Activated CD8-positive, alpha-beta memory T cell treated with anti-CD3 and anti-CD28 coated beads, Interleukin-2, amount 10 ng/mL, durations not matched to agents 7 days and 5 days (primary cell): ENCODE measurements at regions of chr1 and their contacts with region 1.

Region 1: GRCh38 chr1:160777486-160778089 is 18.4 kb upstream of the LY9 start:
- DNase-seq: peak; percentile 66
- ATAC-seq: peak; percentile 52
- H3K4me3 Mint-ChIP-seq: no peak overlapping the region
- H3K27ac Mint-ChIP-seq: peak overlapping the region; percentile 22
- H3K4me1 Mint-ChIP-seq: peaks cover 28% of the 10 kb centered on the region
- H3K27me3 Mint-ChIP-seq: no peaks in the 10 kb centered on the region

Region 2: GRCh38 chr1:160681067-160681890 is 96.3 kb before region 1 on chr1:
- CTCF ChIA-PET with region 1: interaction called, 29 read pairs
- DNase-seq: peak; percentile 93
- ATAC-seq: peak; percentile 72
- H3K4me3 Mint-ChIP-seq: no peak overlapping the region
- H3K27ac Mint-ChIP-seq: peak overlapping the region; percentile 92
- H3K4me1 Mint-ChIP-seq: peaks cover 83% of the 10 kb centered on the region
- H3K27me3 Mint-ChIP-seq: no peaks in the 10 kb centered on the region

Region 3: DNA sequence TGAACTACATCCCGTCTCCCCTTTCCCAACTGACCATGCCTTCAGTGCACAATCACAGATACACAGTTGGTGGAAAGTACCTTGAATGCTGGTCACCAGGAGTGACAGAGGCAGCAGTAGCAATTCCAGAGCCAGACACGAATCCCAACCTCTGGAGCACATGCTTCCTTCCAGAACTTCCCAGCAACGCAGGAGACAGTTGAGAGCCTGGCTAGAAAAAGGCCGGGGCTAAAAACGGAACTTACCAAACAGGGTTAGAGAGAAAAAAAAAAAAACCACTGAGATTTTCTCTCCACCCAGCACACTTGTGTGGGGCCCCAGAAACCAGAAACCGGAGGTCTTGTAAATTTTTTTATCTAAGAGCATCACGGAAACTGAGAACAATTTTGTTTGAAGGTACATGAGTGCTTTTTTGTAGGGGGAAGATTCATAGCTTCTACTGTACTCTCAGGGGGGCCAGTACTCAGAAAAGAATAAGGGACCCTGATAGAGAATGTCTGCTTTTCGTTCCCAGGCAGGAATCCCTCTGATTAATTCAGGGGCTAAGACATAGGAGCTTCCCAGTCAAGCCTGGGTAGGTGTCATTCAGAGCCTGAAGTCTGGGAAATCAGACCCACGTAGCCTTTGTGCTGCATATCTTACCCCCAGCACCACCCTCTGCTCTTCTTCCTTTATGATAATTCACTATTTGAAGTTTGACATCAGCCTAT is 65.8 kb before region 1 on chr1 and contains the start of gene CD48:
- CTCF ChIA-PET with region 1: interaction called, 10 read pairs
- DNase-seq: peak; percentile 79
- ATAC-seq: peak; percentile 48
- H3K4me3 Mint-ChIP-seq: no peak within 1 kb of the TSS
- H3K27ac Mint-ChIP-seq: no peak within 1 kb of the TSS
- H3K4me1 Mint-ChIP-seq: peaks cover 27% of the 10 kb centered on the region
- H3K27me3 Mint-ChIP-seq: no peaks in the 10 kb centered on the region
- total RNA-seq, gene CD48: 304 to 332 TPM

Region 4: GRCh38 chr1:160795951-160796383 is 18.4 kb after region 1 on chr1 and contains the start of gene LY9:
- CTCF ChIA-PET with region 1: interaction called, 133 read pairs
- DNase-seq: peak; percentile 93
- ATAC-seq: peak; percentile 92
- H3K4me3 Mint-ChIP-seq: peak within 1 kb of the TSS; percentile 74
- H3K27ac Mint-ChIP-seq: peak within 1 kb of the TSS; percentile 89
- H3K4me1 Mint-ChIP-seq: peaks cover 59% of the 10 kb centered on the region
- H3K27me3 Mint-ChIP-seq: peaks cover 27% of the 10 kb centered on the region
- total RNA-seq, gene LY9: 1.3 to 8.0 TPM

Region 5: GRCh38 chr1:160821628-160822027 is 44.0 kb after region 1 on chr1:
- CTCF ChIA-PET with region 1: interaction called, 17 read pairs
- DNase-seq: no peak
- ATAC-seq: no peak
- H3K4me3 Mint-ChIP-seq: no peak overlapping the region
- H3K27ac Mint-ChIP-seq: no peak overlapping the region
- H3K4me1 Mint-ChIP-seq: no peaks in the 10 kb centered on the region
- H3K27me3 Mint-ChIP-seq: no peaks in the 10 kb centered on the region

Region 6: GRCh38 chr1:160830321-160831153 is 52.9 kb after region 1 on chr1:
- CTCF ChIA-PET with region 1: interaction called, 54 read pairs
- DNase-seq: peak; percentile 81
- ATAC-seq: peak; percentile 70
- H3K4me3 Mint-ChIP-seq: no peak overlapping the region
- H3K27ac Mint-ChIP-seq: no peak overlapping the region
- H3K4me1 Mint-ChIP-seq: peaks cover 18% of the 10 kb centered on the region
- H3K27me3 Mint-ChIP-seq: no peaks in the 10 kb centered on the region

Region 7: GRCh38 chr1:160855181-160855981 is 77.8 kb after region 1 on chr1:
- CTCF ChIA-PET with region 1: interaction called, 10 read pairs
- DNase-seq: peak; percentile 85
- ATAC-seq: peak; percentile 83
- H3K4me3 Mint-ChIP-seq: no peak overlapping the region
- H3K27ac Mint-ChIP-seq: no peak overlapping the region
- H3K4me1 Mint-ChIP-seq: peaks cover 38% of the 10 kb centered on the region
- H3K27me3 Mint-ChIP-seq: no peaks in the 10 kb centered on the region